WTC11 (cell line): ENCODE measurements at regions of chr1 and their contacts with region 1.

Region 1: GRCh38 chr1:202009326-202010179 is 834 bp upstream of the ELF3 start:
- DNase-seq: peak; percentile 85
- ATAC-seq: peak; percentile 15
- H3K4me3 Mint-ChIP-seq: peak overlapping the region; percentile 76
- H3K27ac Mint-ChIP-seq: peak overlapping the region; percentile 98
- H3K4me1 Mint-ChIP-seq: peaks cover 48% of the 10 kb centered on the region
- H3K27me3 Mint-ChIP-seq: no peaks in the 10 kb centered on the region
- CTCF ChIP-seq: peak; percentile 94

Region 2: DNA sequence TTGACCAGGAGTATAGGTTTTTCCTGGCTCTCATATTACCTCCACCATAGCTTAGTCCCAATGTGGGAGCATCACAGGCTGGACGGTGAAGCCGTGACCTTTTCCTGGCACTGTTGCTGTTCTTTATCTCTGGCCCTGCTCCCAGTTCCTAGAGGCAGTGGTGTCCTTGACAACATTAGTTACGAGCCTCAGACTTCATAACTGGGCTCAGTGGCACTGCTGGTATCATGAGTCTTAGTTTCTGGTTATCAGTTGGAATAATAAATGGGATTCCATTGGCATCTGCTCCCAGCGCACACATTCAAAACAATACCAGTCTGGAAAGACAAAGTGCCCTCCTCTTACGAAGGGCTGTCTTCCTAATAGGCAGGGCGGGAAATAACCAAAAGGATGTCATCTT is 19.1 kb before region 1 on chr1:
- CTCF ChIA-PET with region 1: no interaction called
- POLR2A ChIA-PET with region 1: no interaction called
- DNase-seq: no peak
- ATAC-seq: no peak
- H3K4me3 Mint-ChIP-seq: no peak overlapping the region
- H3K27ac Mint-ChIP-seq: no peak overlapping the region
- H3K4me1 Mint-ChIP-seq: peaks cover 17% of the 10 kb centered on the region
- H3K27me3 Mint-ChIP-seq: no peaks in the 10 kb centered on the region
- CTCF ChIP-seq: no peak

Region 3: DNA sequence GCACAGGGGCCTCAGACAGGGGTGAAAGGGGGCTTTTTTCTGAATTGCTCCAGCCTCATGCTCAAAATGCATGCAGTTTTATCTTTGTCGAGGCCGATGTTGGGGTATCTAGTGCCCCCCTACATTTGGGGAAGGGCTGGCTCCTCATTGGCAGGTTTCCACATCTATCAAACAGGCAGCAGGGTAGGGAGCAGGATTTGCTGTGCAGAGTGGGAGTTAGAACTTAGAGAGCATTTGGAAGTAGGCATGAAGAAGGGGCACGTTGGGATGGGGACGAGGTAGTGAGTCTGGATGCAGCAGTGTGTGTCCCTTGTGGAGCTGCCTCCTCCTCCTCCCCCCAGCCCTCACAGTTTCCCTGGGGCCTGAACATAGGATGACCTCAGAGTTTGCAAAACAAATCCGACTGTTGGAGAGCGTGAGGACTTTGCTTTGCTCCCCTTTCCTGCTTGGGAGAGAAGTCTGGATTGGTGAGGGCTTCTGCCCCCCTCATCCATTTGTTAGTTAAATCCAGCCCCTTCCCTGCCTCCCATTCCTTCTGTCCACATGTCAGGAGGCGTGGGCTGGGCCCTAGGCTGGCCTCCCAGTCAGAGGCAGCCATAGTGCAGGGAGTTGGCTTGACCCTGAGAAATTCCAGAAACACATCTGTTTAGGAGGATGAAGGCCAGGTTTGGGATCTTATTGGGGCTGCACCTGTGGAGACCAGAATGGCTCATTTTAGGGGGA is 76.3 kb after region 1 on chr1:
- CTCF ChIA-PET with region 1: interaction called, 5 read pairs
- POLR2A ChIA-PET with region 1: interaction called, 14 read pairs
- DNase-seq: peak; percentile 39
- ATAC-seq: peak; percentile 34
- H3K4me3 Mint-ChIP-seq: peak overlapping the region; percentile 40
- H3K27ac Mint-ChIP-seq: peak overlapping the region; percentile 96
- H3K4me1 Mint-ChIP-seq: peaks cover 50% of the 10 kb centered on the region
- H3K27me3 Mint-ChIP-seq: no peaks in the 10 kb centered on the region
- CTCF ChIP-seq: no peak

Region 4: GRCh38 chr1:202105539-202106276 is 96.2 kb after region 1 on chr1:
- CTCF ChIA-PET with region 1: interaction called, 47 read pairs
- POLR2A ChIA-PET with region 1: interaction called, 13 read pairs
- DNase-seq: peak; percentile 83
- ATAC-seq: peak; percentile 90
- H3K4me3 Mint-ChIP-seq: peak overlapping the region; percentile 28
- H3K27ac Mint-ChIP-seq: peak overlapping the region; percentile 94
- H3K4me1 Mint-ChIP-seq: peaks cover 42% of the 10 kb centered on the region
- H3K27me3 Mint-ChIP-seq: no peaks in the 10 kb centered on the region
- CTCF ChIP-seq: no peak

Region 5: GRCh38 chr1:202112839-202113672 is 103.5 kb after region 1 on chr1:
- CTCF ChIA-PET with region 1: interaction called, 149 read pairs
- POLR2A ChIA-PET with region 1: interaction called, 9 read pairs
- DNase-seq: no peak
- ATAC-seq: no peak; the same call in none of the 2 replicates
- H3K4me3 Mint-ChIP-seq: no peak overlapping the region
- H3K27ac Mint-ChIP-seq: no peak overlapping the region
- H3K4me1 Mint-ChIP-seq: peaks cover 25% of the 10 kb centered on the region
- H3K27me3 Mint-ChIP-seq: no peaks in the 10 kb centered on the region
- CTCF ChIP-seq: no peak

Region 6: GRCh38 chr1:202122639-202123335 is 113.2 kb after region 1 on chr1 and contains the start of gene GPR37L1:
- CTCF ChIA-PET with region 1: interaction called, 149 read pairs
- POLR2A ChIA-PET with region 1: interaction called, 6 read pairs
- DNase-seq: peak; percentile 83
- ATAC-seq: peak; percentile 82
- H3K4me3 Mint-ChIP-seq: no peak within 1 kb of the TSS
- H3K27ac Mint-ChIP-seq: no peak within 1 kb of the TSS
- H3K4me1 Mint-ChIP-seq: peaks cover 9% of the 10 kb centered on the region
- H3K27me3 Mint-ChIP-seq: no peaks in the 10 kb centered on the region; the same call in 1 of the 2 replicates
- CTCF ChIP-seq: no peak
- total RNA-seq, gene GPR37L1: 0.07 to 0.16 TPM (median 0.09 TPM) in 3 replicates

Region 7: GRCh38 chr1:202135221-202135721 is 125.7 kb after region 1 on chr1:
- CTCF ChIA-PET with region 1: interaction called, 29 read pairs
- POLR2A ChIA-PET with region 1: no interaction called
- DNase-seq: peak; percentile 62
- ATAC-seq: peak; percentile 77
- H3K4me3 Mint-ChIP-seq: no peak overlapping the region
- H3K27ac Mint-ChIP-seq: peak overlapping the region; percentile 60; the same call in 1 of the 2 replicates
- H3K4me1 Mint-ChIP-seq: peaks cover 23% of the 10 kb centered on the region
- H3K27me3 Mint-ChIP-seq: no peaks in the 10 kb centered on the region
- CTCF ChIP-seq: peak; percentile 75